ENCODE measurements at regions of chr3 and their contacts with region 1.

Region 1: DNA sequence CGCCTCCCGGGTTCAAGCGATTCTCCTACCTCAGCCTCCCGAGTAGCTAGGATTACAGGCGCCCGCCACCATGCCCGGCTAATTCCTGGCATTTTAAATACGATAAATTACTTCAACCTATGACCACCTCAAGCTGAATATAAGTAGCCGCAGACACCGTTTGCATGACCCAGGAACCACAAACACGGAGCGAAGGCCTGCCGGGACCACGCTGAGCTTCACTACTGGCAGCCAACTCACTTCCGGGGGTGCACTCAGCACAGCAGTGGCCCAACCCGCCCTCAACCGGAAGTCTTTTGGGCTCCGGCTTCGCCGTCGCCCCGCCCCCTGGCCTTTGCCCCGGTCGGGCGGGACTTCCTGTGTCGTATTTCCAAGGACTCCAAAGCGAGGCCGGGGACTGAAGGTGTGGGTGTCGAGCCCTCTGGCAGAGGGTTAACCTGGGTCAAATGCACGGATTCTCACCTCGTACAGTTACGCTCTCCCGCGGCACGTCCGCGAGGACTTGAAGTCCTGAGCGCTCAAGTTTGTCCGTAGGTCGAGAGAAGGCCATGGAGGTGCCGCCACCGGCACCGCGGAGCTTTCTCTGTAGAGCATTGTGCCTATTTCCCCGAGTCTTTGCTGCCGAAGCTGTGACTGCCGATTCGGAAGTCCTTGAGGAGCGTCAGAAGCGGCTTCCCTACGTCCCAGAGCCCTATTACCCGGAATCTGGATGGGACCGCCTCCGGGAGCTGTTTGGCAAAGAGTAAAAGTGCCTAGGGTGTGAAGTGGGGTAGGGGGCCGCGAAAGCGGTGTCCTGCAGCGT is at the start of gene TIMMDC1:
- DNase-seq: peak; percentile 97

Region 2: DNA sequence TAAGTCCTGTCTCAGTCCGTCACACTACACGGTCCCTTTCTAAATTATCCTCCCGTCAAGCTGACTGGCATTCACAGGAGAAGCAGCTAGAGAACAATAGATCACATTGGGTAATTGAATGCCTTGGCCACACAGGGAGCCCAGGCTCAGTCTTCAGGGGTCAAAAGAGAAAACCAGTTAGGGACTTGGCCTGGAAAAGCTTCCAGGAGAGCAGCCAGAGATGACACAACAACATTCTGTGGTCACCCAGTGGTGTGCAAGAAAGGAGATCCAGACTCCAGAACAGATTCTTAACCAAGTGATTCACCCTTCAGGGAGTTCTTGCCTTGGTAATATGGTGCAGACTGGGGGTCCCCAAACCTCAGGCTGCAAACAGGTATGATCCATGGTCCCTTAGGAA is 188.3 kb before region 1 on chr3:
- CTCF ChIA-PET with region 1: no interaction called
- POLR2A ChIA-PET with region 1: no interaction called
- DNase-seq: no peak

Region 3: DNA sequence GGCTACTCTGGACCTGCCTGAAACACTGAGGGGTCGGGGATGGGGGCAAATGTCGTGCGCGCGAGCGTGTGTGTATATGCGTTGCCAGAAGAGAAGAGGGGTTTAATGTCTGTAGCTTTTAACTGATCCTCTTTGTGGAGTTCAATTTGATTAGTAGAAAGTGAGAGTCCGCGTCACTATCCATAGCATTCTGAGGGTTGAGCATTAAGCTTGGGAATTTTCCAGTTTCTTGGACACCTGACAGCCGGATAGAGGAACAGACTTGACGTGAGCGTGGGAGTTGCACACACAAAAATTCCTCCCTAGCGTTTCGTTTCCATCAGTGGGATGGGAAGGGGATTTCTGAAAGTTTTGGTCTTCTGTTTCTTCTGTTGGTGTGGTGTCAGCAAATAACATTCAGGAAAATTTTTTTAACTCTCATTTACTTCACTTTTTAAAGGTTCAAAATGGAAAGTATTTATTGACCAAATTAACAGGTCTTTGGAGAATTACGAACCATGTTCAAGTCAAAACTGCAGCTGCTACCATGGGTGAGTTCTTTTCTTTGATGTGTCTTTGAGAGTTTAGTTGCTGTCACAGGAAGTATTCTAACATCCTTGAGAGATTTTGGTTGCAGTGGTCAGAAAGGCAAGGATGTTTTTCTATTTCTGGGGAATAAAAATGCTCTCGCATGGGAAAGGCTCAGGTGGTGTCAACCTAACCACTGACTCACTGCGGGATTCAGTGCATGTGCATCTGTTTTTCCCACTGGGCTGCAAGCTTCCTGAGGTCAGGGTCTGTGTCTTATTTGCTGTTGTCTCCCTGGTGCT is 28.8 kb before region 1 on chr3:
- CTCF ChIA-PET with region 1: no interaction called
- POLR2A ChIA-PET with region 1: interaction called, 13 read pairs
- DNase-seq: no peak

Region 4: GRCh38 chr3:120192159-120192558 is 693.8 kb after region 1 on chr3:
- CTCF ChIA-PET with region 1: no interaction called
- POLR2A ChIA-PET with region 1: no interaction called
- DNase-seq: no peak